ENCODE measurements at regions of chr11 and their contacts with region 1.

Region 1: DNA sequence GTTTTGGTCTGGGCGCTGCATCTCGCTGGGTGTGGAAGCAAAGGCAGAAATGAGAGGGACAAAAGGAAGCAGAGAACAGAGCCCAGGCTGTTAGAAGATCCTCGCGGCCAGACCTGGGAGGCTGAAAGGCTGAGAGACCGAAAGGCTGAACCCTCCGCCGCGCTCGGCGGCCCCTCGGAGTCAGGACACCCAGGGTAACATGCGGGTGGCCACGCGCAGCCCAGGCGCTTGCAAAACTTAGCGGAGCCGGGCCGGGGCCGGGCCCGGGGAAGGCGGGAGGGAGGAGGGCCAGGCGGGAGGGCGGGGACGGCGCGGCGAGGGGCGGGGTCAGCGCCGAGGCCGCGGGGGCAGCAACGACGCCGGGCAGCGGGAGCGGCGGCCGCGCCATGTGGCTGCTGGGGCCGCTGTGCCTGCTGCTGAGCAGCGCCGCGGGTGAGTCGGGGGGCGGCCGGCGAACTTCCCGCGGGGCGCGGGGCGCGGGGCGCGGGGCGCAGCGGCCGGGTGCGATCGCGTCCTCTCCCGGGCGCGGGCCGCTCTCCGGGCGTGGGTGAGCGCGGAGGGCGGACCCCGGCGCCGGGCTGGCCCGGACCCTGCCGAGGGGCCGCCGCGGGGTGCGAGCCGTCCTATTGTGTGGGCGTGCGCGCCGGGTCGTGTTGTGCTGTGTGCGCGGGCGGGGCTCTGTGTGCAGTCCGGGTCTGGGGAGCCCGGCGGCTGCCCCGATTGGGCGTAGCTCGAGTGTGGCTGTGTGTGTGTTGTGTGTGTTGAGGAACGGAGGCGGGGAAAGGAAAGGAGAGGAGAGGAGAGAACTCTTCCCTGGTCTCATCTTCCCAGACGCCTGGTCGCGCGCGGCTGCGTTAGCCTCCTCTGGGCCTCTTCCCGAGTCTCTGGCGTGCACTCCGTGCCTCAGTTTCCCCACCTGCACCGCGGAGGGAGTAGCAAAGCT is at the start of gene LDLRAD3:
- DNase-seq: peak; percentile 48
- total RNA-seq, gene LDLRAD3: 0.12 and 1.9 TPM in 2 replicates

Region 2: DNA sequence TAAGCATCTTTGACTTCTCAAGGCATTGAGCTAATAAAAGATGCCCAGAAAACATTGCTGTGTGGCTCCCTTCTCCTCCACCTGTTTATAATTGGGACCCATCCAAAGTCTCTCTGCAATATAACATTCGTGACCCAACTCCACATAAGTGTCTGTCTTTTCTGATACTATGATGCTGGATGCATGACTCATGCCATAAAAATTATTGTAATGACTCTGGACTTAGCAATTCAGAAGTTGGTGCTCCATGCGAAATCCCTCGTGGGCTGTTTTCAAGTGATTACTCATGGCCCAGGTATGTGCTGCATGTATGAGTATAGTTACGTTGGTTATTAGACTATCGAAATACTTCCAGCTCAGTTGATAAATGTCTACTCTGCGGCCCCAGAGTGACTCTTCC is 314.1 kb before region 1 on chr11:
- in situ Hi-C with region 1: loop called (anchors 25 kb)
- DNase-seq: peak; percentile 74

Region 3: DNA sequence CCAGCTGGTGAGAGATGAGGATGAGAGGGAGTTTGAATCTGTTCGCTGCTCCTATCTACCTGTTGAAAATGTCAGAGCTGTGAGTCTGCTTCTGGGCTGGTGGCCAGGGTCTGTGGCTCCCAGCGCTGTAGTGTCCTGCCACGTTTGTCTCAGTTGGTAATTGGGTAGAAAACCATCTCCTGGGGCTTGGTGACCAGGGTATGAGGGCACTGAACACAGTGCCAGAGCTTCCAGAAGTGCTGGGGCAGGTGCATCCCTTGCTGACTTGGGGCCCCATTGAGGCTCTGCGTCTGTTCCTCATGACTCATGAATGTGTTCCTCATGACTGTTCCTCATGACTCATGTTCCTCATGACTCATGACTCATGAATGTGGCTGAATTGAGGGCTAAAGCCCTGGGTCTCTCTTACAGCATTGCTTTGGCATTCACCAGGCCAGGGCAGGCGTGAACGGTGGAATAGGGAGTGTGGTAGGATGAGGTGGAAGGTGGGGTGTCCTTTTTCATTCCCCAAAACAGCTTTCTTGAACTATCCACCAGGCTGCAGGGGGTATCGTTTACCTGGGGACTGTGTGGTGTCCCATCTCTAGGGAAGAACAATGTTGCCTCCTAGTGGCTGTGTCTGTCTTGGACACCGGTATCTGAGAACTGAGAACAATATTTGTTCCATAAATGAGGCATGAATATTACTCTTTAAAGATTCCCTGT is 205.7 kb after region 1 on chr11:
- in situ Hi-C with region 1: no loop called
- DNase-seq: peak; percentile 94

Region 4: GRCh38 chr11:36162883-36163434 is 219.0 kb after region 1 on chr11:
- in situ Hi-C with region 1: no loop called
- DNase-seq: no peak

Region 5: GRCh38 chr11:36339888-36340287 is 395.9 kb after region 1 on chr11:
- in situ Hi-C with region 1: no loop called
- DNase-seq: no peak

Measured in Caki2 (cell line).